Vagina (tissue), 2 donors: ENCODE measurements at regions of chr17 and their contacts with region 1.

Region 1: DNA sequence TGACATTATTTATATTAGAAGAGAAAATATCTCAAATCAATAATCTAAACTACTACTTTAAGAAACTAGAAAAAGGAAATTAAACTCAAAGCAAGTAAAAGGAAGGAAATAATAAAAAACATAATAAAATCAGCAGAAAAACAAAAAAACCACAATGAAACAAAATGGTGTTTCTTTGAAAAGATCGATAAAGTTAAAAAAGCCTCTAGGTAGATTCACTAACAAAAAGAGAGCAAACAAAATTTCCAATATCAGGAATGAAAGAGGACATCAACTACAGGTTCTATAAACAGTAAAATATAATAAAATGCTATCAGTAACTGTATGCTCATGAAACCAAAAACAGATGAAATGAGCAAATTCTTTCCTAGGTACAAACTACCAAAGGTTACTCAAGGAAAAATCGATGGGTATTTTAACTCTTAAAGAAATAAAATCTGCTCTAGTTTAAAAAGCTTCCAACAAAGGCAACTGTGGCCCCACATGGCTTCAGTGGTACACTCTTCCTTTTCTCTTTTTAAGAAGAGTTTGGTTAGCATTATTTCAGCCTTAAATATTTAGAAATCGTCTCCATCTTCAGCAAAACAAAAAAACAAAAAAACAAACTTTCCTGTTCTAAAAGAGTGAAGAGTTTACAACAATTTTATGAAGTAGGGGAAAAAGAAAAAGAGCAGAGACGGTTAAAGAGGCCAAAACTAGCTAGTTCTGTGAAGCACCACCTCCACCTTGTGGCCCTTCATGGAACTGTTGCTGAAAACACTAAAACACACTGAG is 102.2 kb downstream of the TRIM37 start:
- DNase-seq: no peak
- H3K4me3 ChIP-seq: no peak overlapping the region
- H3K27ac ChIP-seq: no peak overlapping the region
- H3K4me1 ChIP-seq: no peaks in the 10 kb centered on the region
- H3K27me3 ChIP-seq: no peaks in the 10 kb centered on the region
- CTCF ChIP-seq: peak; percentile 67 to 94 (median 91)
- POLR2A ChIP-seq: no peak

Region 2: GRCh38 chr17:58710936-58711775 is 293.4 kb before region 1 on chr17:
- intact Hi-C with region 1: loop called (anchors 10 kb)
- DNase-seq: no peak
- H3K4me3 ChIP-seq: no peak overlapping the region
- H3K27ac ChIP-seq: no peak overlapping the region
- H3K4me1 ChIP-seq: no peaks in the 10 kb centered on the region
- H3K27me3 ChIP-seq: no peaks in the 10 kb centered on the region
- CTCF ChIP-seq: peak in 2 of 3 experiments; percentile 60 to 62
- POLR2A ChIP-seq: no peak

Region 3: DNA sequence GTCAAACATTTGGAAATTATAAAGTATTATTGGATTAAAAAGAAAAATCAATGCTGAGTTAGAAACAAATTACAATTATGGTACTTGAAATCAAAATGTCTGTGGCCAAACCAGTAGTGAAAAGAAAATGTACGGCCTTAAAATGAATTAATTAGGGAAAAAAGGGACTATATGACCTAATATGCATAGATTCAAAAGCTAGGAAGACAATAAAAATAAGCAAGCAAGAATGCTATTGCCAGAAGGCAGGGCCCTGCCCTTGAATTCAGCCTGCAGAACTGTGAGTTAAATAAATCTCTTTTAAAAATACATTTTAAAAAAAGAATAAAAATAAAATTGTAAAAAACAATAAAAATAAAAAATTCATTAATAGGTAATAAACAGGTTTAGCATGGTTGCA is 13.5 kb after region 1 on chr17:
- intact Hi-C with region 1: no loop called
- DNase-seq: no peak
- H3K4me3 ChIP-seq: no peak overlapping the region
- H3K27ac ChIP-seq: no peak overlapping the region
- H3K4me1 ChIP-seq: no peaks in the 10 kb centered on the region
- H3K27me3 ChIP-seq: no peaks in the 10 kb centered on the region
- CTCF ChIP-seq: no peak
- POLR2A ChIP-seq: no peak